Aorta (tissue), 5 donors: ENCODE measurements at regions of chr10 and their contacts with region 1.

Region 1: DNA sequence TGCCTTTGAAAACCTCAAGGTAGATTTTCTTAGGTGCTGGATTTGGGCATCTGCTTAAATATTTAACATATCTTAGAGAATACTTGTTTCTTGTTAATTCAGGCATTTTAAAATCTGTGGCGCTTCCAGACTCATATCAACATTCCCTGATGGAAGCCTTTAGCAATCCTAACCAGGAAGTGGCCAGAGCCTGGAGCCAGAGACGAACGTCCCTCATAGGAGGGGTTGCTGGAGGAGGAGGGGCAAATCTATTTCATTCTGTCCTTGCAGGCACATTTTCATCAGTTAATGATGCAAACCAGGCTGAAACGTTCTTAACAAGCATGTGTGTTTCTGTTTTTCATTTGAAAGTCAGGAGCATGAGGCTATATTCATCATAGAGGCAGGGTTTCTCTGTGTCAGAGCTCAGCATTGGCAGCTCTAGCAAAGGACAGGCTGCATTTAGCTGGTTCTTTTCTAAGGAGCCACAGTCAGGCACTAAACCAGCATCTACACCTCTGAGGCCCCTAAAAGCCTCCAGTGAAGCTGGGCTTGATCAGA is 17.8 kb upstream of the IFIT2 start:
- DNase-seq: peak in 1 of 2 donors; percentile 76
- ATAC-seq: peak; percentile 92
- H3K4me3 ChIP-seq: no peak overlapping the region
- H3K27ac ChIP-seq: peak overlapping the region; percentile 92 to 98
- H3K4me1 ChIP-seq: peaks cover 2 to 5% of the 10 kb centered on the region in 2 donors
- H3K27me3 ChIP-seq: no peaks in the 10 kb centered on the region

Region 2: GRCh38 chr10:89351780-89352597 is 68.0 kb after region 1 on chr10:
- intact Hi-C with region 1: loop called in 1 of 2 experiments (anchors 5 kb)
- DNase-seq: peak in 1 of 2 donors; percentile 59
- ATAC-seq: peak; percentile 61
- H3K4me3 ChIP-seq: no peak overlapping the region
- H3K27ac ChIP-seq: peak overlapping the region; percentile 99
- H3K4me1 ChIP-seq: peaks cover 0 to 4% of the 10 kb centered on the region in 2 donors
- H3K27me3 ChIP-seq: no peaks in the 10 kb centered on the region

Region 3: DNA sequence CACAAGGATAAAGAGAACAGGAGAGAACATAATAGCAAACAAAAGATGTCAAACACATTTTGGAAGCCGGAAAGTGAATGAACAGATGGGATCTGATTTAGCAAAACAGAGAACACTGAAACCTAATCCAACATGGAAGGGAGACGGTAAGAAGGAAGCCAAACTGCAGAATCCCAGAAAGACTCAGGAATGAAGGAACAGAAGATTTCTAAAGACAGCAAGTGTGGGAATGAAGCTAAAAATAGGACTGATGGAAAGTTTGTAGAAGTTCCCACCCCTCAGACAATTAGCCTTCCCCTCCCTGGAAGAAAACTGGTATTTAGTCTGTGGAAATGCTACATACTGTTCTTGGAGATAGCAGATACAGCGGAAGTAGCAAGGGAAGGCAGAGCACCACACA is 210.6 kb after region 1 on chr10:
- intact Hi-C with region 1: no loop called
- DNase-seq: no peak
- ATAC-seq: no peak
- H3K4me3 ChIP-seq: no peak overlapping the region
- H3K27ac ChIP-seq: no peak overlapping the region
- H3K4me1 ChIP-seq: no peaks in the 10 kb centered on the region
- H3K27me3 ChIP-seq: no peaks in the 10 kb centered on the region

Region 4: DNA sequence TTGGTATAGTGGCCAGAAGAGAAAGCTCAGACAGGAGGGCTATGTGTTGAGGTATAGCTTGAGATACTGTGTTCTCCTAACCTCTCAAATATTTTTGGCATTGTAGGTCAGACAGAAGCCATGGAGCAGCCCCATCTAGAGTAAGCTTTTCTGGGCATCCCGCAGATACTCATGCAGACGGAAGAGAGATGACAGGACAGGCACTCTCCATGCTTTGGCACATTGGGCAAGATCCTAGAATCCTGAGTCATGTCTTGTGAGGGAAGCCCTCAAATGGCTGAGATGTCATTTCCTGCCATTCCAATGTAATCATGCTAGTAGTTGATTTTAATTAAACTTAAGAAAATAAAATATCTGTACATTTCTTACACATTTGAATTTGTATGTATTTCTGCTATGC is 400.6 kb after region 1 on chr10:
- intact Hi-C with region 1: no loop called
- DNase-seq: no peak
- ATAC-seq: no peak
- H3K4me3 ChIP-seq: no peak overlapping the region
- H3K27ac ChIP-seq: no peak overlapping the region
- H3K4me1 ChIP-seq: no peaks in the 10 kb centered on the region
- H3K27me3 ChIP-seq: no peaks in the 10 kb centered on the region